ENCODE measurements at regions of chr1 and their contacts with region 1.

Region 1: GRCh38 chr1:46179138-46180081 is 3.1 kb upstream of the P3R3URF start:
- DNase-seq: peak in 4 of 5 donors; percentile 79 to 85 (median 84)
- ATAC-seq: peak; percentile 76 to 85 (median 82)
- H3K4me3 ChIP-seq: peak overlapping the region in 2 of 12 donors; percentile 0 to 18
- H3K27ac ChIP-seq: peak overlapping the region in 7 of 12 donors; percentile 12 to 65 (median 35)
- H3K4me1 ChIP-seq: peaks cover 0 to 57% (median 31%) of the 10 kb centered on the region in 12 donors
- H3K27me3 ChIP-seq: no peaks in the 10 kb centered on the region
- CTCF ChIP-seq: peak; percentile 83 to 95 (median 90)
- POLR2A ChIP-seq: no peak

Region 2: GRCh38 chr1:45892068-45892785 is 287.2 kb before region 1 on chr1:
- intact Hi-C with region 1: loop called in 1 of 10 experiments (anchors 10 kb)
- DNase-seq: peak in 3 of 5 donors; percentile 33 to 43 (median 40)
- ATAC-seq: peak; percentile 78 to 91 (median 89)
- H3K4me3 ChIP-seq: peak overlapping the region in 1 of 12 donors; percentile 1
- H3K27ac ChIP-seq: peak overlapping the region; percentile 8 to 81 (median 68)
- H3K4me1 ChIP-seq: peaks cover 0 to 18% (median 7%) of the 10 kb centered on the region in 12 donors
- H3K27me3 ChIP-seq: no peaks in the 10 kb centered on the region
- CTCF ChIP-seq: no peak
- POLR2A ChIP-seq: peak in 1 of 2 donors; percentile 39

Region 3: DNA sequence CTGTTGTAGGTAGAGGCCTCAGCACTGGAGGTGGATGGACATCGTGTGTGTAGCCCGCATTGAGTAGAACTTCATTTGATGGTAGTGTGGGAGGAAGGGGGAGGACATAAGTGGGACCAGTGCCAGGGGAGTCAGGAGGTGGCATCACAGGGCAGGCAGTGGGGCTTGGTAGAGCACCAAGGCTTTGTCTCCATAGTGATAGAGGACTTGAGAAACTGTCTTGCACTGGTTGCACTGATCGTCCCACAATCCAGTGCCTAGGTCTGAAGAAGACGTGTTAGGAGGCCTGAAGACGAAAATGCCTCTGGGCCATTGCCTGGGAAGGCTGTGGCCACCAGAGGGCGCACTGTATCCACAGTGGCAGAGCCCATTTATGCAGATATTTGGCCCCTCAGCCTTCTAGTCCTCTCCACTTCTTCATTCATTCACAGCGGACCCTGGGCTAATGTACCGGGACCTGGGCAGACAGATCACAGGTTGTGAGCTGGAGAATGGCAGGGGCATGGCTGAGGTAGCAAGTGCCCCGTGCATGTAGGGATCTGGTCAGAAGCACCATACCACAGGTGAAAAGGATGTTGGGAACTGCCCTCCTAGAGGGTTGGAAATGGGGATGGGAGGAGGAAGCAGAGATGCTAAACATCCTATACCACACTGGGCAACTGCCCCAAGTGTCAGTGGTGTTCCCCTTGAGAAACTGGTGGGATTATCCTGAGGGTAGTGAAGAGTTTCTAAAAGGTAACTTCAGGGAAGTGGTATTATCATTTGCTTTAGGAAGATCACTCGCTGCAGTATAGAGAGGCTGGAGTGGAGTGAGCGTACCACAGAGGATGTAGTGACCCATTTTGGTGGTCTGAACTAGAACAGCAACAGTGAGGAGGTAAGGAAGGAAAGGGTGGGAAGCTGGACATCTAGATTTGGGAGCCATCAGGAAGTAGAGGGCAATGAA is 142.2 kb before region 1 on chr1:
- intact Hi-C with region 1: loop called (anchors 1 to 2 kb)
- DNase-seq: peak; percentile 81 to 92 (median 85)
- ATAC-seq: peak; percentile 35 to 70 (median 59)
- H3K4me3 ChIP-seq: no peak overlapping the region
- H3K27ac ChIP-seq: peak overlapping the region in 9 of 12 donors; percentile 8 to 52 (median 35)
- H3K4me1 ChIP-seq: peaks cover 11 to 67% (median 39%) of the 10 kb centered on the region in 12 donors
- H3K27me3 ChIP-seq: no peaks in the 10 kb centered on the region
- CTCF ChIP-seq: peak; percentile 93 to 99 (median 97)
- POLR2A ChIP-seq: no peak

Region 4: GRCh38 chr1:46196609-46197008 is 17.2 kb after region 1 on chr1:
- intact Hi-C with region 1: loop called in 1 of 10 experiments (anchors 1 kb)
- DNase-seq: no peak
- ATAC-seq: no peak
- H3K4me3 ChIP-seq: no peak overlapping the region
- H3K27ac ChIP-seq: peak overlapping the region in 1 of 12 donors; percentile 44
- H3K4me1 ChIP-seq: peaks cover 0 to 47% (median 27%) of the 10 kb centered on the region in 12 donors
- H3K27me3 ChIP-seq: no peaks in the 10 kb centered on the region
- CTCF ChIP-seq: no peak
- POLR2A ChIP-seq: no peak

Region 5: GRCh38 chr1:46798810-46799209 is 619.4 kb after region 1 on chr1 and contains the start of gene CYP4B1:
- intact Hi-C with region 1: no loop called
- DNase-seq: peak; percentile 45 to 84 (median 74)
- ATAC-seq: peak; percentile 92 to 95 (median 94)
- H3K4me3 ChIP-seq: peak within 1 kb of the TSS in 10 of 12 donors; percentile 10 to 59 (median 38)
- H3K27ac ChIP-seq: peak within 1 kb of the TSS in 9 of 12 donors; percentile 20 to 87 (median 45)
- H3K4me1 ChIP-seq: peaks cover 0 to 16% (median 5%) of the 10 kb centered on the region in 12 donors
- H3K27me3 ChIP-seq: no peaks in the 10 kb centered on the region
- CTCF ChIP-seq: no peak
- POLR2A ChIP-seq: peak; percentile 12 to 96
- total RNA-seq, gene CYP4B1: 1.5 to 103 (median 10.0) TPM in 8 of 9 donors, not detected in the other